ENCODE measurements at regions of chr18 and their contacts with region 1.

Region 1: DNA sequence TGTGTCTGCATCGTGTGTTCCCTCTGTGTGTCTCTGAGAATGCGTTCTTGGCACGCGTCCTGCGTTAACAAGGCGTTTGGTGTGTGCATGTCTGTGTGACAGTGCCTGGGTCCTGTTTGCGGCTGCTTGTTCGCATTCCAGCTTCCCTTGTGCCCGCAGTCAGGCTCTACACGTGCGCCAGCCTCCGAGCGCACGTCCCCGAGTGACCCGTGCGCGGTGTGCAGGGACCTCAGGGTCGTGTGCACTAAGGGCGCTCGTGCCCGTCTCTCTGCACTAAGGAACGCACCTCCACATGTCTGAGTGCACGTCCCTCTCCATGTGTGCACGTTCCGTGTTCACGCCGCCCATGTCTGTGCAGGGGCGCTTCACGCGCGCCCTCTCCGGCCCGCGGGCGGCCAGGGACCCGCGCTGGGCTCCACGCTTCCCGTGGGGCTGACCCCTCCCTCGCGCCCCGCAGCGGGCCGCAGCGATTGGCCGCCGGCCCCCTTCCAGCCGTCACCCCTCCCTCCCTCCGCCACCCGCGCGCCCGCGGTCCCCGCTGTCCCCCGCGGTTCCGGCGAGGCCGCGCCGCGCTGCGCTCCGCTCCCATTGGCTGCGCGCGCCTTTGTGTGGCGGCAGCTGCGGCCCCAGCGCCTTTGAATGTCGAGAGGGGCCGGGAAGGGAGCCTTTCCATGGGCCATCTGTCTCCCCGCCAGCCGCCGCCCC is 229.4 kb downstream of the HAUS1 start:
- DNase-seq: peak; percentile 18 to 55
- ATAC-seq: peak; percentile 33 to 57 (median 56)
- H3K4me3 ChIP-seq: peak overlapping the region; percentile 40
- H3K4me3 Mint-ChIP-seq: peak overlapping the region; percentile 87
- H3K27ac ChIP-seq: no peak overlapping the region
- H3K27ac Mint-ChIP-seq: peak overlapping the region; percentile 64 to 78
- H3K4me1 ChIP-seq: peaks cover 45% of the 10 kb centered on the region
- H3K4me1 Mint-ChIP-seq: peaks cover 59% of the 10 kb centered on the region in 2 donors
- H3K27me3 ChIP-seq: no peaks in the 10 kb centered on the region
- H3K27me3 Mint-ChIP-seq: no peaks in the 10 kb centered on the region
- CTCF ChIP-seq: no peak

Region 2: DNA sequence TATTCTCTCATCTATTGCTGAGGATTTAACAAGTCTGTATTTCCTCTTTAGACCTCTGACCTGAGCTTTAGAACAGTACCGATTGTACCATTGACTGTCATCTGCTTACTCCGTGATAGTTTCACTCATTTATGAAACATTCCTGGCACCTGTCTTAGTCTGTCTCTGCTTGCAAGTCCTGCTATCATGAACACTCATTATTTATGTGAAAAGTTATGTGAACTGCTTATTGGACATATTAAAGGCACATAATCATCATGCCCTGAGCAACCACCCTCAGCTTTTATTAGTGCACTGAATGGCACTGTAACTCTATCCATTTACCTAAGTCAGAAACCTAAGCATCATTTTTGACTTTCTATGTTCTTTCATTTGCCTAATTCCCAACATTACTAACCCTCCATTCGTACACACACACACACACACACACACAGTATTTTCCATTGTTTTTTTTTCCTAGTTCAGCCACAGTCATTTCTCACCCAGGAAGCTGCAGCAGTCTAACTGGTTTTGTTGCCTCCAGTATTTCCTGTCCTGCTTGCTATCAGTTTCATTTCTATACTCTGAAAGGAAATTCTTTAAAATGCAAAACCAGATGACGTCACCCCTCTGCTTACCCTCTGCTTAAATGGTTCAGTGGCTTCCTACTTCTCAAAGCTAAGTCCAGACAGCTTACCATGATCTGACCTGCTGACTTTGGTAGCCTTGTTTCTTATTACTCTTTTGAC is 83.3 kb before region 1 on chr18:
- intact Hi-C with region 1: loop called (anchors 5 kb)
- DNase-seq: peak; percentile 20 to 91
- ATAC-seq: peak; percentile 93 to 95 (median 94)
- H3K4me3 ChIP-seq: peak overlapping the region; percentile 11
- H3K4me3 Mint-ChIP-seq: peak overlapping the region; percentile 83
- H3K27ac ChIP-seq: peak overlapping the region; percentile 96
- H3K27ac Mint-ChIP-seq: peak overlapping the region; percentile 91 to 95
- H3K4me1 ChIP-seq: peaks cover 17% of the 10 kb centered on the region
- H3K4me1 Mint-ChIP-seq: peaks cover 34 to 35% of the 10 kb centered on the region in 2 donors
- H3K27me3 ChIP-seq: no peaks in the 10 kb centered on the region
- H3K27me3 Mint-ChIP-seq: no peaks in the 10 kb centered on the region
- CTCF ChIP-seq: no peak

Region 3: DNA sequence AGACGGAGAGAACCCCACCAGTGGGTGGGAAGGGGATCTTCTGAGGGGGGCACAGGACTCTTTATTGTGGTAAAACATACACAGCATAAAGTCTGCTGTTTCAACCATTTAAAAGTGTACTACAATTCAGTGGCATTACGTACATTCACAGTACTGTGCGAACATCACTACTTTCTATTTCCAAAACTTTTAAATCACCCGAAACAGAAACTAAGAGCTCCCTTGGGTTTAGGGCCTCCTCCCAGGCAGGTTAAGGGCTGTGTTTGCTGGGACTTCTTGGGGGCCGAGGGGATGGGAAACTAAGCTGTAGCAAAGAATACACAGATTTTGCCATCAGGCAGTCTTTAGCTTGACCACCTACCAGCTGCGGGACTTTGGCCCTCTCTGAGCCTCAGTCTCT is 12.6 kb after region 1 on chr18:
- intact Hi-C with region 1: loop called (anchors 1 kb)
- DNase-seq: no peak
- ATAC-seq: peak; percentile 60 to 73 (median 69)
- H3K4me3 ChIP-seq: no peak overlapping the region
- H3K4me3 Mint-ChIP-seq: peak overlapping the region; percentile 59
- H3K27ac ChIP-seq: peak overlapping the region; percentile 62
- H3K27ac Mint-ChIP-seq: peak overlapping the region; percentile 90 to 95
- H3K4me1 ChIP-seq: peaks cover 81% of the 10 kb centered on the region
- H3K4me1 Mint-ChIP-seq: peaks cover 95 to 100% of the 10 kb centered on the region in 2 donors
- H3K27me3 ChIP-seq: no peaks in the 10 kb centered on the region
- H3K27me3 Mint-ChIP-seq: no peaks in the 10 kb centered on the region
- CTCF ChIP-seq: no peak

Region 4: GRCh38 chr18:46352520-46353250 is 19.1 kb after region 1 on chr18:
- intact Hi-C with region 1: loop called (anchors 2 kb)
- DNase-seq: no peak
- ATAC-seq: peak in 2 of 3 donors; percentile 47 to 76
- H3K4me3 ChIP-seq: no peak overlapping the region
- H3K4me3 Mint-ChIP-seq: no peak overlapping the region
- H3K27ac ChIP-seq: no peak overlapping the region
- H3K27ac Mint-ChIP-seq: peak overlapping the region; percentile 60 to 70
- H3K4me1 ChIP-seq: peaks cover 61% of the 10 kb centered on the region
- H3K4me1 Mint-ChIP-seq: peaks cover 87% of the 10 kb centered on the region in 2 donors
- H3K27me3 ChIP-seq: no peaks in the 10 kb centered on the region
- H3K27me3 Mint-ChIP-seq: no peaks in the 10 kb centered on the region
- CTCF ChIP-seq: no peak

Region 5: DNA sequence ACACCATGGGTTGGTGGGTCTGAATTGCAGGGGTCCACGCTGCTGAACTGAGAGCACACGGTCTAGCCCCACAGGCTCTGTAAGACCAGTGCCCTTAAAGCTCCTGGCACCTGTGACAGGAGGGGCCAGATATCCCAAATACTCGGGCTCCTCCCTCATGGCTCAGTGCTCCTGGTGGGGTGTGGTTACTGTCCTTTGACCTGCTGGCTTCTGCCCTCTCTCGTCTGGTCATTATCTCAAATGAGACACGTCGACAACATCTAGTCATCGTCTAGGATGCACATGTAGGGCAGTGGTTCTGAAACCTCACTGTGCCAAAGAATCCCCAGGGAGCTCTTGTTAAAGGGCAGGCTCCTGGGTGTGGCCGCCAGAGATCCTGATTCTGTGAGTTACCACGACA is 65.0 kb after region 1 on chr18:
- intact Hi-C with region 1: loop called (anchors 1 kb)
- DNase-seq: no peak
- ATAC-seq: peak in 1 of 3 donors; percentile 10
- H3K4me3 ChIP-seq: no peak overlapping the region
- H3K4me3 Mint-ChIP-seq: peak overlapping the region; percentile 30
- H3K27ac ChIP-seq: peak overlapping the region; percentile 77
- H3K27ac Mint-ChIP-seq: peak overlapping the region; percentile 83 to 95
- H3K4me1 ChIP-seq: peaks cover 81% of the 10 kb centered on the region
- H3K4me1 Mint-ChIP-seq: peaks cover 90 to 97% of the 10 kb centered on the region in 2 donors
- H3K27me3 ChIP-seq: no peaks in the 10 kb centered on the region
- H3K27me3 Mint-ChIP-seq: no peaks in the 10 kb centered on the region
- CTCF ChIP-seq: no peak

Region 6: DNA sequence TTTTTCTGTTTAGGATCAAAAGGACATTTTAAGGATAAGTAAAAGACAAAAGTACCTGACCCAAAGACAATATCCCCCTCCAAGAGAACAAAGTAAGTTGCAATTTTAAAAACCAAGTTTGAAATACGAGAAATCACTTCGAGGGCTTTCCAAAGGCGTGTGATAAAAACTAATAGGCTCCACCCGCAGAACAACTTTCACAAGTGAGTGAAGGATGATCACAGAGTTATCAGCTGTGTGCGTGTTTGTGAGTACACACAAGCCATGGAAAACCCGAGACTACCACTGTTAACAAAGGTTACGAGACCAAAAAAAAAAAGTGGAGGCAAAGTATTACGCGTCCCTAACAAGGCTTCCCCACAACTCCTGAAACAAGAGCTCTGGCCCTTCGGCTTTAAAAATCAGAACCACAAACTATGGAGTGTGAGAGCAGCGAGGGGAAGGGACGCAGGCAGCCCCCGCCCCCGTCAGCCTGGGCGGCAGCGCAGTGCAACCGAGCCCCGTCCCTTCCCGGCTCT is 1596.2 kb after region 1 on chr18:
- intact Hi-C with region 1: loop called (anchors 10 kb)
- DNase-seq: peak in 1 of 2 donors; percentile 66
- ATAC-seq: peak in 2 of 3 donors; percentile 11 to 18
- H3K4me3 ChIP-seq: peak overlapping the region; percentile 83
- H3K4me3 Mint-ChIP-seq: peak overlapping the region; percentile 94
- H3K27ac ChIP-seq: peak overlapping the region; percentile 87
- H3K27ac Mint-ChIP-seq: peak overlapping the region; percentile 87 to 94
- H3K4me1 ChIP-seq: peaks cover 6% of the 10 kb centered on the region
- H3K4me1 Mint-ChIP-seq: peaks cover 57 to 60% of the 10 kb centered on the region in 2 donors
- H3K27me3 ChIP-seq: no peaks in the 10 kb centered on the region
- H3K27me3 Mint-ChIP-seq: peaks cover 0 to 3% of the 10 kb centered on the region in 2 donors
- CTCF ChIP-seq: no peak